Aorta (tissue), 5 donors: ENCODE measurements at regions of chr12 and their contacts with region 1.

Region 1: GRCh38 chr12:15122344-15122743 is 98.9 kb downstream of the RERG start:
- DNase-seq: no peak
- ATAC-seq: no peak
- H3K4me3 ChIP-seq: no peak overlapping the region
- H3K27ac ChIP-seq: no peak overlapping the region
- H3K4me1 ChIP-seq: no peaks in the 10 kb centered on the region
- H3K27me3 ChIP-seq: no peaks in the 10 kb centered on the region

Region 2: DNA sequence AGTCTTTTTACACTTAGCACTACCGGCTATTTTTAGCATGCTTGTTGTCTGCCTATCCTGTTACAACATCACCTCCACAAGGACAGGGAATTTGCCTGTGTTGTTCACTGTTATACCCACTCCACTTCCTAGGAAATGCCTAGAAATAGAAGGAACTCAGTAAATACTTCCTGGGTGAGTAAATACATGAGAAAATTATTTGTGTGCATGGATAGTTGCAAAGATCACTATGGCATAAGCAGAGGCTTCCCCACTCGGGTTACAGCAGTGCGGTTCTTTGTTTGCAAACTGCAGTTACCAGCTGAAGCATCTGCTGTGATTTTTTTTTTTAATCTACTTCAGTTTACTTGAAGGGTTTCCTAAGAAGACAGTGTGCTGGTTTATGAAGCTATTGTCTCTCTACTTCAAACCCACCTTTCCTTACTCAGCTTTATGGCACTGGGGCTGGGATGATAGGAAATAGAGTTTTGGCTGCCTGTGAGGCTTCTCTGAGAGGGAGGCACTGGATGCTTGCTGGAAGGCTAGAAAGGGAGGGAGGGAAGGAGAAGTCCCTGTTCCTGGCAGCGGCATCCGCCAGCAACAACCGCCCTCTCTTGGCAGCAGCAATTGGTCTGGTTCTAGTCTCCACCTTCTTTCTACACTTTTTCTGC is 120.5 kb before region 1 on chr12:
- intact Hi-C with region 1: loop called in 1 of 2 experiments (anchors 10 kb)
- DNase-seq: peak; percentile 79 to 80
- ATAC-seq: peak; percentile 87
- H3K4me3 ChIP-seq: peak overlapping the region in 1 of 2 donors; percentile 6
- H3K27ac ChIP-seq: peak overlapping the region in 1 of 2 donors; percentile 33
- H3K4me1 ChIP-seq: peaks cover 2% of the 10 kb centered on the region in 2 donors
- H3K27me3 ChIP-seq: no peaks in the 10 kb centered on the region

Region 3: GRCh38 chr12:15356951-15357364 is 234.6 kb after region 1 on chr12:
- intact Hi-C with region 1: no loop called
- DNase-seq: no peak
- ATAC-seq: no peak
- H3K4me3 ChIP-seq: no peak overlapping the region
- H3K27ac ChIP-seq: no peak overlapping the region
- H3K4me1 ChIP-seq: no peaks in the 10 kb centered on the region
- H3K27me3 ChIP-seq: no peaks in the 10 kb centered on the region